Activated CD8-positive, alpha-beta T cell treated with anti-CD3 and anti-CD28 coated beads, Interleukin-2, amount 10 ng/mL, durations not matched to agents 7 days and 5 days (primary cell): ENCODE measurements at regions of chr22 and their contacts with region 1.

Region 1: DNA sequence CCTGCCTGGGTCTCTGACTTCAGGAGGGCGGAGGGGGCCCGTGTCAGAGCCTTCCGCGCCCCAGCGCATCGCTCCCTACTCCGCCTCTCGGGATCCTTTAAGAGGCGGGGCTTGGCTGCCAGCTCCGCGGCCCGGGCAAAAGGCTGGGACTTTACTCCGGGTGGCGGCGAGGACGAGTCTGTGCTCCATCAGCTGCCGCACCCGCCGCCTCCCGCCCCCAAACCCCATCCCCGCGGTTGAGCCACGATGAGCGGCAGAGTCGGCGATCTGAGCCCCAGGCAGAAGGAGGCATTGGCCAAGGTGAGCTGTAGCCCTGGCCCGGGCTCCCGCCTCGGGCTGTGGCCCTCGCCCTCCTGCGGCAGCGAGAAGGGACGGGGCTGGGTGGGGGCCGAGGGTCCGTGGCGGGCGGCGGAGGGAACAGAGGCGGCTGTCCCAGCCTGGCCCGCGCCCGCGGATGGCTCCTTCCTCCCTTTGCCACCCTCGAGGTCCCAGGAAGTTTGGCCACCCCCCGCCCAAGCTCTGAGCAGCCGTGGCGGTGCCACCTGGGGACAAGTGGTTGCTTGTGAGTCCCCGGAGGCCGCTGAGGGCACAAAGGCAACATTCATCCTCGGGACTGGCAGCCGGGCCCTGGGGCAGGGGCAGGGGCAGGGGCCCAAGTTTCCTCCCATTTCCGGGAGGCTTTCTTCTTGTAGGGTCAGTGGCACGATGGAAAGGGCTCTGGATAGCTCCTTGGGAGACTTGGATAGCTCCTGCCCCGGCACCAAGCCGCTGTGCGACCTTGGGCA is at the start of gene SEC14L2:
- DNase-seq: peak; percentile 65
- ATAC-seq: peak; percentile 90
- H3K4me3 Mint-ChIP-seq: peak within 1 kb of the TSS; percentile 90
- H3K27ac Mint-ChIP-seq: peak within 1 kb of the TSS; percentile 61
- H3K4me1 Mint-ChIP-seq: peaks cover 54% of the 10 kb centered on the region
- H3K27me3 Mint-ChIP-seq: no peaks in the 10 kb centered on the region
- total RNA-seq, gene SEC14L2: 9.7 to 13.1 TPM

Region 2: GRCh38 chr22:30340911-30341685 is 56.0 kb before region 1 on chr22:
- CTCF ChIA-PET with region 1: no interaction called
- POLR2A ChIA-PET with region 1: no interaction called
- DNase-seq: no peak
- ATAC-seq: no peak
- H3K4me3 Mint-ChIP-seq: no peak overlapping the region
- H3K27ac Mint-ChIP-seq: no peak overlapping the region
- H3K4me1 Mint-ChIP-seq: no peaks in the 10 kb centered on the region
- H3K27me3 Mint-ChIP-seq: no peaks in the 10 kb centered on the region

Region 3: DNA sequence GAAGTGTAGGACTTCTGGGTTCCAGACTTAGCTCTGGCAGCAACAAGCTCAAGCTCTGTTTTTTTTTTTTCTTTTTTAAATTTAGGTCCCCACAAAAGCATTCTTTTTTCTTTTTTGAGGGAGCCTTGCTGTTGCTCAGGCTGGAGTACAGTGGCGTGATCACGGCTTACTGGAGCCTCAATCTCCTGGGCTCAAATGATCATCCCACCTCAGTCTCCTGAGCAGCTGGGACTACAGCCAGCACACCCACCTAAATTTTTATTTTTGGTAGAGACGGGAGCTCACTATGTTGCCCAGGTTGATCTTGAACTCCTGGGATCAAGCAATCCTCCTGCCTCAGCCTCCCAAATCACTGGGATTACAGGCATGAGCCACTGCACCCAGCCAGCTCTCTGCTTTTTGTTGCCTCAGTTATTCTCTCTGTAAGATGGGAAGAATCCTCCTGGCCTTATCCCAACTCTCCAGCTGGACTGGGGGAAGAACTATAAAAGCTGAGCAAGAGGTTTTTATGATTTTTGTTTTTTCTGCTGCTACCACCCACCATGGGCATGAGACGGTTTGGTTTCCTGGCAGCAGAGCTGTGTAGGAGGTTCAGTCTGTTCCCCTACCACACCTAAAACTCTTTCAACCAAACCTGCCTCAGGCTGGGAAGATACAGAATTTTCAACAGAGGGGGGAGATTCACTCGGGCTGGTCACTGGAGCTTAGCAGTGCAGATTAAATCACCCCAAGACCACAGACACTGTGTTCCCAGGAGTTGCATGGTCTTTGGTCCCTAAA is 16.9 kb after region 1 on chr22:
- CTCF ChIA-PET with region 1: interaction called, 26 read pairs
- POLR2A ChIA-PET with region 1: interaction called, 9 read pairs
- DNase-seq: no peak
- ATAC-seq: no peak
- H3K4me3 Mint-ChIP-seq: no peak overlapping the region
- H3K27ac Mint-ChIP-seq: peak overlapping the region; percentile 49
- H3K4me1 Mint-ChIP-seq: peaks cover 11% of the 10 kb centered on the region
- H3K27me3 Mint-ChIP-seq: no peaks in the 10 kb centered on the region